Gastrocnemius medialis (tissue), 4 donors: ENCODE measurements at regions of chr19 and their contacts with region 1.

Region 1: GRCh38 chr19:39996811-39997594 is at the start of gene ZNF546:
- DNase-seq: peak; percentile 85
- ATAC-seq: peak; percentile 96 to 98
- H3K4me3 ChIP-seq: peak within 1 kb of the TSS; percentile 85 to 93 (median 87)
- H3K27ac ChIP-seq: peak within 1 kb of the TSS; percentile 91 to 98 (median 92)
- H3K4me1 ChIP-seq: peaks cover 13 to 17% of the 10 kb centered on the region in 2 donors
- H3K27me3 ChIP-seq: no peaks in the 10 kb centered on the region
- CTCF ChIP-seq: no peak
- POLR2A ChIP-seq: peak; percentile 87 to 91
- total RNA-seq, gene ZNF546: 3.2 to 6.9 (median 4.2) TPM

Region 2: DNA sequence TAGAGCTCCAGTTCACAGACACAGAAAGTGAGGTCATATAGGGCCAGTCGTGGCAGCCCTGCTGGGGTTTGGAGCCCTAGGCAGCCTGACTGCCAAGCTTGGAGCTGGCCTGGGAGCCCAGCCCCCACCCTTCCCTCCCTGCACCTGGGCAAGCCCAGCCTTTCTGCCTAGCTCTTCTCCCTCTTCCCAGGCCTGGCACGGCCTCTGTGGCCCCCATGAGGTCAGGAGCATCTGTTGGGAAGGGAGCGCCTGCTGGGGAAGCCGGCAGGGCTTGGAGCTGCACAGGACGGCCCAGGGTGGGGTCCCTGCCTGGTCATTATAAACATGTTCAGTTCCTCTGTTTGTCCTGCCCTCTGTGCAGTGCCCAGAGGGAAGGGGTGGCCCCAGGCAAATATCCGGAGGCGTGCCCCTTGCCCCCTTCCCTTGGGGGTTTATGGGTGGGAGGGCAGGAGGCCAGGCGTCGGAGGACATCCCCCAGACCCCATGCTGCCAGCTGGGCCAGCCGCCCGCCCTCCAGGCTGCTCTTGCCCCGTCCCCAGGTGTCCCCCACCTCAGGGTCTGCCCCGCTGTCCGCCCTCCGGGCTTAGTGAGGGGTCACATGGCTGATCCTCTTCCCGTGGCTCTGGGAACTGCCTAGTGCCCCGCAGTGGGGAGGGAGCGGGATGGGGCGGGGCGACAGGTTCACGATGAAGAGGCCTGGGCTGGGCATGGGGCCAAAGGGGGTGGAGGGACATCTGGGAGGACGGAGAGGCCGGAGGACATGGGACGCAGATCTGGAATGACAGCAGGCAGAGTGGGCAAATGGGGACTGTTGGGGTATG is 830.2 kb before region 1 on chr19:
- in situ Hi-C with region 1: no loop called
- intact Hi-C with region 1: no loop called
- DNase-seq: no peak
- ATAC-seq: no peak
- H3K4me3 ChIP-seq: no peak overlapping the region
- H3K27ac ChIP-seq: no peak overlapping the region
- H3K4me1 ChIP-seq: no peaks in the 10 kb centered on the region
- H3K27me3 ChIP-seq: no peaks in the 10 kb centered on the region
- CTCF ChIP-seq: no peak
- POLR2A ChIP-seq: no peak

Region 3: DNA sequence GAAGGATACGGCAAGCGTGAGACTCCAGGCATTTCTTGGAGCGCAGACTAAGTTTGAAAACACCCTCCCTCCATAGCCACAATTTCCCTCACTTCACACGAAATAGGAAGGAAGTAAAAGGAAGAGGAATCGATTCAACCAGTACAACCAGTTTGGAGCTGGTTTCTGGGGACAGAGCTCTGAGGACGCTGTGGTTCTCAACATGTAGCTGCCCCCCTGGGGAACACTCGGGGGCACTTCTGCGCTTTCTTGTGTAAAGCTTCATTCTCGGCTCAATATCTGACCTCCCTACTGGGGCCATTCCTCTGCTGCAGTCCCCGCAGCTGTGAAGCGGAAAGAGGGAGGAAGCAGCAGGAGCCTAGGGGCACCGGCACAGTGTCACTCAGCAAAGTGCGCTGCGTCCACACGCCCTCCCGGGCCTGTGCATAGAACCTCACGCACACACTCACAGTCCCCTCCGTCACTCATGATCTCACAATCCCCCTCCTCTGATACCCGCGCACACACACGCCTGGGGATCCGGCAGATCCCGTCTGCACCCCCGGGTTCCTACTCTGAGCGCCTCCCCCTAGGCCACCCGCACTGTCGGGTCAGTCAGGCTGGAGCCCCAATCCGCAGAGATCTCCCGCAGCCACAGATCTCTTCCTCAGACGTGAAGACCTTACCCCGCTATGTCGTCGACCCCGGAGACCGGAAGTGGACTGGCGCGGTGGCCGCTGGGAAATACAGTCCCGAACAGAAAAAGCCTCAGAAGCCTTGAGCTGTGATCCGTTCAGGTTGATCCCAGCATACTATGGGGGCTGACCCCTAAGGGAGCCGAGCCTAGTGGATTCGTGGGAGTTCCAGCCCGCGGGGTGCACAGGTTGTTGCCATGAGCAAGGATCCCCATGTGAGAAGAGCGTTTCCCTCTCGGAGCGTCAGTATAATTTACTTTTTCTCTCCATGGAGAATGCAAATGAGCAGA is 93.5 kb after region 1 on chr19 and contains the start of gene ZNF780A:
- in situ Hi-C with region 1: no loop called
- intact Hi-C with region 1: loop called (anchors 5 kb)
- DNase-seq: peak; percentile 51 to 56
- ATAC-seq: peak; percentile 97 to 98
- H3K4me3 ChIP-seq: peak within 1 kb of the TSS; percentile 67 to 89 (median 76)
- H3K27ac ChIP-seq: peak within 1 kb of the TSS; percentile 82 to 95 (median 92)
- H3K4me1 ChIP-seq: peaks cover 7 to 26% of the 10 kb centered on the region in 2 donors
- H3K27me3 ChIP-seq: peaks cover 3 to 9% (median 4%) of the 10 kb centered on the region in 3 donors
- CTCF ChIP-seq: no peak
- POLR2A ChIP-seq: peak in 1 of 2 donors; percentile 29
- total RNA-seq, gene ZNF780A: 1.0 to 8.0 (median 5.4) TPM

Region 4: DNA sequence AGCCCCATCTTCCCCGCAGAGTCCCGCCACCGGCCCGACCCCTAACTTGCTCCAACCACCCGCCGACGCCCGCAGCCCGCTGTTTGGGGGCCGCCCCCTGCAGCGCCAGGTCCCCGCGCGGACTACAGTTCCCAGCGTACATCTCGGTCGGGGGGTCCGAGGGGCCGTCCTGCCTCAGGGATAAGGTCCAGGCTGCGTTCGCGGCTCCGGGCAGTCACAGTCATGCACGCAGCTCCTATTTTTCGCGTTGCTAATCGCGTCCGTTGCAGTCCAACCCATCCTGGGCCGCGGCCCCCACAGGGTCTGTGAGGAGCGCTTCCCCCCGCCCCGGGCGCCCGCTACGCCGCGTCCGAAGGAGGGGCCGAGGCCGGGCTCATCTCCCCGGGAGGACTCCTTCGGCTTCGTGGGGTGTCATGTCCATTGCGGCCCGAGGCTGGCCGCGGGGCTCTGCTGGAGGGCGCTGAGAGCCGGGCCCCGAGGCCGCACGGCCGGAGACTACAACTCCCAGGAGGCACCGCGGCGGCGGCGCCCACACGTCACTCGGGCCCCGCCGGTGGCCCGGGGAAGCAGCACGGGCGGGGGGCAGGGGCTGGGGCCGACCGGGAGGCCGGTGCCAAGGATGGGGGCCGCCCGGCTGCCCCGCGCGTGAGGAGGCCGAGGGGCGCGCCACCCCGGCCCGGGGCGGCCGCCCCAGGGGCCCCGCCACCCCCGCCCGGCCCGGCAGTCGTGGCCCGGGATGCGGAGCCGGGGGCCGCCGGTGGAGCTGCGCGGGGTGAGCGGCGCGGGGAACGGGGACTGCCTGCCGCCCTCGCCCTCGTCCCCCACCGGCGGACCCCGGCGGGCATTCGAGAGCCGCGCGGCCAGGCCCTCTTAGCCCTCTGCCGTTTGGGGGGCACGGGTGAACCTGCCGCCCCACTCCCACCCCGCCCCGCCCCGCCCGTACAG is 194.2 kb after region 1 on chr19 and contains the start of gene MAP3K10:
- in situ Hi-C with region 1: no loop called
- intact Hi-C with region 1: loop called (anchors 10 kb)
- DNase-seq: peak; percentile 45 to 59
- ATAC-seq: peak; percentile 95
- H3K4me3 ChIP-seq: peak within 1 kb of the TSS; percentile 98 to 100 (median 100)
- H3K27ac ChIP-seq: peak within 1 kb of the TSS; percentile 98 to 100 (median 100)
- H3K4me1 ChIP-seq: peaks cover 12 to 19% of the 10 kb centered on the region in 2 donors
- H3K27me3 ChIP-seq: no peaks in the 10 kb centered on the region
- CTCF ChIP-seq: no peak
- POLR2A ChIP-seq: peak; percentile 40 to 54
- total RNA-seq, gene MAP3K10: 16.4 to 25.8 (median 21.6) TPM

Region 5: GRCh38 chr19:40221858-40222837 is 225.1 kb after region 1 on chr19:
- in situ Hi-C with region 1: loop called in 1 of 4 experiments (anchors 25 kb)
- intact Hi-C with region 1: no loop called
- DNase-seq: peak; percentile 67 to 83
- ATAC-seq: peak; percentile 91 to 93
- H3K4me3 ChIP-seq: no peak overlapping the region
- H3K27ac ChIP-seq: no peak overlapping the region
- H3K4me1 ChIP-seq: peaks cover 11 to 14% of the 10 kb centered on the region in 2 donors
- H3K27me3 ChIP-seq: peaks cover 58 to 76% (median 70%) of the 10 kb centered on the region in 3 donors
- CTCF ChIP-seq: peak; percentile 84 to 93 (median 90)
- POLR2A ChIP-seq: no peak